Breast epithelium (tissue), 4 donors: ENCODE measurements at regions of chr19 and their contacts with region 1.

Region 1: DNA sequence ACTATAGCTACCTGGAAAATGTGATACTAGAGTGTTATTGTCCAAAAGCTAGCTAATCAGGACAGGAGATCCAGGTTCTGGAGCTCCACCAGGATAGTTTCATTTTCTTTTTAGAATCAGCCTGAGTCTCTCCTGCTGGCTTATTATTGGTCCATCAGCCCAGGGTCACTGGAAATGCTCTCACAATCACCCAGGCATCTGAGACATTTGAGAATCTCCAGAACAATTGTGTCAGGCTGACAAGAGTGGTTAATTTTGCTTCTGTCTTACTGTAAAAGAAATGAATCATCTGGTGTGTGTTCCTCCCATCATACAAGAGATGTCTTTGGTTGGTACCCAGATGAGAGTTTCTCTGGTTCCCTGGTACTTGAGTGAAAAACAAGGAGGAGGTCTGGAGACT is 43.6 kb upstream of the ZNF681 start:
- DNase-seq: no peak
- H3K4me3 ChIP-seq: no peak overlapping the region
- H3K27ac ChIP-seq: no peak overlapping the region
- H3K4me1 ChIP-seq: no peaks in the 10 kb centered on the region
- H3K27me3 ChIP-seq: no peaks in the 10 kb centered on the region
- CTCF ChIP-seq: no peak
- POLR2A ChIP-seq: no peak

Region 2: DNA sequence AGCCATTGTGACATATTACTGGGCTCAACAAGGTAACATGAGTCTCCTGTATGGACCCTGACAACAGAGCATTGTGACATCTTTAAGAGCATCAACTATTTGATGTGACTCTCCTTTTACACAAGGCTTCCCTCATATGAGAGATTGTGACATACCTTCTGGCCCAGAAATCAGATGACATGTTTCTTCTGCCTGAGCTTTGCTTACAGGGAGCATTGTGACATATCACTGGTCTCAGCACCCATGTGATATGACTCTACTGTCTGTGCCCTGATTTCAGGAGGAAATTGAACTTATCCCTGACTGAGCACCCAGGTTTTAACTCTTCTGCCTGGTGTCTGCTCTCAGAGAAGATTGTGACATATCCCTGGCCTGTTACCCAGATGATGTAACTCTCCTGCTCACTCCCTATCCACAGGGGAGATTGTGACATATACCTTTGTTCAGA is 27.7 kb before region 1 on chr19:
- intact Hi-C with region 1: no loop called
- DNase-seq: no peak
- H3K4me3 ChIP-seq: no peak overlapping the region
- H3K27ac ChIP-seq: peak overlapping the region in 1 of 2 donors; percentile 60
- H3K4me1 ChIP-seq: no peaks in the 10 kb centered on the region
- H3K27me3 ChIP-seq: no peaks in the 10 kb centered on the region
- CTCF ChIP-seq: no peak
- POLR2A ChIP-seq: no peak

Region 3: GRCh38 chr19:23914402-23915301 is 112.4 kb after region 1 on chr19 and contains the start of gene ZNF726:
- intact Hi-C with region 1: no loop called
- DNase-seq: peak; percentile 88
- H3K4me3 ChIP-seq: peak within 1 kb of the TSS; percentile 59 to 81 (median 69)
- H3K27ac ChIP-seq: peak within 1 kb of the TSS; percentile 53 to 77
- H3K4me1 ChIP-seq: no peaks in the 10 kb centered on the region
- H3K27me3 ChIP-seq: no peaks in the 10 kb centered on the region
- CTCF ChIP-seq: no peak
- POLR2A ChIP-seq: no peak
- total RNA-seq, gene ZNF726: 1.6 to 9.4 (median 3.6) TPM

Region 4: GRCh38 chr19:23932878-23933277 is 130.6 kb after region 1 on chr19:
- intact Hi-C with region 1: loop called (anchors 5 kb)
- DNase-seq: no peak
- H3K4me3 ChIP-seq: no peak overlapping the region
- H3K27ac ChIP-seq: no peak overlapping the region
- H3K4me1 ChIP-seq: no peaks in the 10 kb centered on the region
- H3K27me3 ChIP-seq: no peaks in the 10 kb centered on the region
- CTCF ChIP-seq: no peak
- POLR2A ChIP-seq: no peak